SK-N-SH (cell line): ENCODE measurements at regions of chr9 and their contacts with region 1.

Region 1: DNA sequence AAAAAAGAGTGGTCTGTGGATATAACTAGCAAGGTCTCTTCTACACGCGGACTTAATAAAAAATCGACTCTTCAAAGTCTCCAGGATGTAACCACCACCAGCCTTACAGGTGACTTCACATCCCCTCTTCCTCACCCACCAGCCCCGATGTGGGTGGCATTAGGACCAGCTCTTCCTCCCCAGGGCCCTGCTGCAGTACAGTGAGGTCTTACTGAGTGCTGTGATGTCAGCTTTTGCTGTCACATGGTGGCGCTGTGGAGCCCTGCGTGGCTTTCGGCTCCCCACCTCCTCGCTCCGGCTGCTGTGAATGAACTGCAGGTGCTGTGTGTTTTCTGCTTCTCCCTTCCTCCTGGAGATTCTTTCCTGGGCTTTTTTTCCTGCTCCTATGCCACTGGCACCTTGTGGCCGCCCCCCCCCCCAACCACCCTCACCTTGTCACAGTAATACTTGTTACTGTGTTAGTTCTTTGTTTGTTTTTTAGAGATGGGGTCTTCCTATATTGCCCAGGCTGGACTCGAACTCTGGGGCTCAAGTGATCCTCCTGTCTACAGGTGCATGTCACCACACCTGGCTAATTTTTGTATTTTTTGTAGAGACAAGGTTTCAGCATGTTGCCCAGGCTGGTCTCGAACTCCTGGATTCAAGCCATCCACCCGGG is 15.8 kb upstream of the RAPGEF1 start:
- DNase-seq: peak; percentile 86
- H3K4me3 ChIP-seq: peak overlapping the region in 1 of 2 experiments; percentile 20; a peak in 1 of 4 replicates
- H3K27ac ChIP-seq: no peak overlapping the region
- H3K4me1 ChIP-seq: no peaks in the 10 kb centered on the region
- H3K27me3 ChIP-seq: no peaks in the 10 kb centered on the region; the same call in 1 of the 2 replicates
- CTCF ChIP-seq: peak; percentile 79
- EP300 ChIP-seq: no peak
- RAD21 ChIP-seq: peak; percentile 80

Region 2: GRCh38 chr9:131889437-131890251 is 134.0 kb after region 1 on chr9:
- CTCF ChIA-PET with region 1: no interaction called
- POLR2A ChIA-PET with region 1: no interaction called
- DNase-seq: peak; percentile 74
- H3K4me3 ChIP-seq: no peak overlapping the region
- H3K27ac ChIP-seq: peak overlapping the region in 1 of 2 experiments; percentile 95; a peak in 2 of 4 replicates
- H3K4me1 ChIP-seq: peaks cover 6 to 57% of the 10 kb centered on the region in 2 experiments; a peak in 2 of 4 replicates
- H3K27me3 ChIP-seq: no peaks in the 10 kb centered on the region
- CTCF ChIP-seq: no peak
- EP300 ChIP-seq: peak in 1 of 2 experiments; percentile 96; a peak in 2 of 4 replicates
- RAD21 ChIP-seq: peak; percentile 26

Region 3: GRCh38 chr9:132249123-132249522 is 493.5 kb after region 1 on chr9:
- CTCF ChIA-PET with region 1: interaction called, 17 read pairs
- POLR2A ChIA-PET with region 1: no interaction called
- DNase-seq: no peak
- H3K4me3 ChIP-seq: no peak overlapping the region
- H3K27ac ChIP-seq: no peak overlapping the region
- H3K4me1 ChIP-seq: no peaks in the 10 kb centered on the region; a peak in 1 of 4 replicates
- H3K27me3 ChIP-seq: no peaks in the 10 kb centered on the region
- CTCF ChIP-seq: no peak
- EP300 ChIP-seq: no peak
- RAD21 ChIP-seq: no peak